CD4-positive, alpha-beta T cell (primary cell): ENCODE measurements at regions of chr10 and their contacts with region 1.

Region 1: DNA sequence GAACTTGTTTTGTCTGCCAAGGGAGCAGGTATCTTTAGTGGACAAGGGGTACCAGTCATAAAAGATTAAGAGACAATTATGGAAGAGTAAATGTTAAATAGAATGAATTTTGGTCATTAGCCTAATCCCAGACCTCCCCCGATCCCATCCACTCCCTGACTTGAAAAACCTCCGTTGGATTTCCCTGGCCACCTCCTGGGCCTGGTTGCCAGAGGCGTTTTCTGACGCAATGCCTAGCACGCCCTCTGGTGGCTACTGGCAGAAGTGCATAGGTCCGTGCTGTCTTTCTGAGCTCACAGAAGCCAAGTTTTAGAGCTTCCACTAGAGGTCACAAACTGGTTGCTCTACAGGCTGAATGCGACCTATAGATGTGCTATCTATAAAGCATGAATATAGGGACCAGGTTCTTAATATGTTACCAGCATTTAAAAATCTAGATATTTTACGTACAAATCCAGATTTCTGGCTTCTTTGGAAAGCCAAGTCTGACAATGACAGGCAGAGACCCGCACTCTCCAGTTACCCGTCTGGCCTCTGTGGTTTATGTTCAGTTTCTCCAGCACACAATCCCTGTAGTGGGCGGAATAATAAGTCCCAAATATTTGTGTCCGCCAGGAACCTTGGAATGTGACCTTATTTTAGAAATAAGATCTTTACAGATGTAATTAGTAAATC is 39.8 kb downstream of the SPOCK2 start:
- DNase-seq: peak; percentile 82 to 94 (median 90)
- ATAC-seq: peak; percentile 99
- H3K4me3 ChIP-seq: no peak overlapping the region
- H3K4me3 Mint-ChIP-seq: no peak overlapping the region
- H3K27ac ChIP-seq: no peak overlapping the region
- H3K27ac Mint-ChIP-seq: no peak overlapping the region
- H3K4me1 ChIP-seq: no peaks in the 10 kb centered on the region
- H3K4me1 Mint-ChIP-seq: peaks cover 9% of the 10 kb centered on the region
- H3K27me3 ChIP-seq: no peaks in the 10 kb centered on the region
- H3K27me3 Mint-ChIP-seq: no peaks in the 10 kb centered on the region
- CTCF ChIP-seq: peak; percentile 100

Region 2: GRCh38 chr10:71319042-71319799 is 729.4 kb before region 1 on chr10 and contains the start of gene SLC29A3:
- CTCF ChIA-PET with region 1: no interaction called
- POLR2A ChIA-PET with region 1: no interaction called
- intact Hi-C with region 1: loop called in 1 of 2 experiments (anchors 10 kb)
- DNase-seq: peak; percentile 69 to 93 (median 79)
- ATAC-seq: peak; percentile 86
- H3K4me3 ChIP-seq: peak within 1 kb of the TSS; percentile 88
- H3K4me3 Mint-ChIP-seq: peak within 1 kb of the TSS; percentile 97
- H3K27ac ChIP-seq: no peak within 1 kb of the TSS
- H3K27ac Mint-ChIP-seq: peak within 1 kb of the TSS; percentile 66
- H3K4me1 ChIP-seq: peaks cover 32% of the 10 kb centered on the region
- H3K4me1 Mint-ChIP-seq: peaks cover 31% of the 10 kb centered on the region
- H3K27me3 ChIP-seq: no peaks in the 10 kb centered on the region
- H3K27me3 Mint-ChIP-seq: no peaks in the 10 kb centered on the region
- CTCF ChIP-seq: peak; percentile 56
- total RNA-seq, gene SLC29A3: 2.3 to 2.5 TPM

Region 3: DNA sequence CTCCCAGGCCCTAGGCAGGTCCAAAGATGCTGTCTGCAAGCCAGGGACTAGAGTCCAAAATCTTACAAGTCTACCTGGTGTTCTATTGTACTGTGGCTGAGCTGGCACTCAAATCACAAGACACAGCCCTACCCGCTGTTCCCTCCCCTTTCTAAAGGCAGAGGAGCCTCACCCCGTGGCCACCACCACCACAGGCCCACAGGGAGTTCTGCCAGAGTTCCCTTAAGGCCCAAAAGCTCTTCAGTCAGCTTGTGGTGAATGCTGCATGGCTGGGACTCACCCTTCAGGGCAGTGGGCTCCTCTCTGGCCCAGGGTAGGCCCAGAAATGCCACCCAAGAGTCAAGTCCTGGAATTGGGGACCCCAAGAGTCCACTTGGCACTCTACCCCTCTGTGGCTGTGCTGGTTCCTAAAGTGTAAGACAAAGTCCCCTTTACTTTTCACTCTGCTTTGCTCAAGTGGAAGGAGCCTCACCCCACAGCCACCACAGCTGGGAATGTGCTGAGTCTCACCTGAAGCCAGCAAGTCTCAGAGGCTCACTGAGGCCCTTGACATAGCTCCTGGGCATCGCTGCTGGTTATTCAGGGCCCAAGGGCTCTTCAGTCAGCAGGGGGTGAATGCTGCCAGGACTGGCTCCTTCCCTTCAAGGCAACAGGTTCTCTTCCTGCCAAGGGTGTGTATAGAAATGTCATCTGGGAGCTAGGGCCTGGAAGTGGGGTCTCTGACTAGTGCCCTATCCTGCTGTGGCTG is 148.7 kb before region 1 on chr10:
- CTCF ChIA-PET with region 1: interaction called, 4 read pairs
- POLR2A ChIA-PET with region 1: interaction called, 6 read pairs
- intact Hi-C with region 1: loop called (anchors 1 to 5 kb)
- DNase-seq: no peak
- ATAC-seq: no peak
- H3K4me3 ChIP-seq: no peak overlapping the region
- H3K4me3 Mint-ChIP-seq: no peak overlapping the region
- H3K27ac ChIP-seq: no peak overlapping the region
- H3K27ac Mint-ChIP-seq: no peak overlapping the region
- H3K4me1 ChIP-seq: peaks cover 6% of the 10 kb centered on the region
- H3K4me1 Mint-ChIP-seq: peaks cover 15% of the 10 kb centered on the region
- H3K27me3 ChIP-seq: no peaks in the 10 kb centered on the region
- H3K27me3 Mint-ChIP-seq: no peaks in the 10 kb centered on the region
- CTCF ChIP-seq: no peak

Region 4: DNA sequence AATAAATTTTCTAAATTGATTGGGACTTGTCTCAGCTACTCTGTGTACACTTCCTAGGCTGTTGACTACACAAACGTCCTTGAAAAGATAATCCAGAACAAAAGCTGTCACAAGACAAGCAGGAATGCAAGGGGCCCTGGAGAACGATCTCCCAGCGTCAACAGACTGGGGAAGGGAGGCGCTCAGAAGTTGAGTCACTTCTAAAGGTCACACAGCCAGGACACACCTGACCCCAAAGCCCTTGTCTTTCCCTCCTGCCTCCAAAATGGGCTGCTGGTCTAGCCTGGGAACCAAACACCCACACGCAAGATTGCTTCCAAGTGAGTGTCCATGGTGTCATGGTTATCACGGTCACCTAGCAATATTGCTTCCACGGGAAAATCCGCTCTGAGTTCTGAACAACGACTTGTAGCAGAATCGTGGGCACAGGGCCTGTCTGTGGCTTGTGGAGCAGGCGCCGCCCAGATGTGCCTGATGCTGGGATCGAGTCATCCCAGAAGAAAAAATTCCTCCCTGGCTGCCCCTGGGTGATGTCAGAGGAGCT is 10.1 kb before region 1 on chr10:
- CTCF ChIA-PET with region 1: interaction called, 10 read pairs
- POLR2A ChIA-PET with region 1: no interaction called
- intact Hi-C with region 1: no loop called
- DNase-seq: no peak
- ATAC-seq: no peak
- H3K4me3 ChIP-seq: no peak overlapping the region
- H3K4me3 Mint-ChIP-seq: no peak overlapping the region
- H3K27ac ChIP-seq: no peak overlapping the region
- H3K27ac Mint-ChIP-seq: no peak overlapping the region
- H3K4me1 ChIP-seq: no peaks in the 10 kb centered on the region
- H3K4me1 Mint-ChIP-seq: no peaks in the 10 kb centered on the region
- H3K27me3 ChIP-seq: no peaks in the 10 kb centered on the region
- H3K27me3 Mint-ChIP-seq: no peaks in the 10 kb centered on the region
- CTCF ChIP-seq: no peak

Region 5: DNA sequence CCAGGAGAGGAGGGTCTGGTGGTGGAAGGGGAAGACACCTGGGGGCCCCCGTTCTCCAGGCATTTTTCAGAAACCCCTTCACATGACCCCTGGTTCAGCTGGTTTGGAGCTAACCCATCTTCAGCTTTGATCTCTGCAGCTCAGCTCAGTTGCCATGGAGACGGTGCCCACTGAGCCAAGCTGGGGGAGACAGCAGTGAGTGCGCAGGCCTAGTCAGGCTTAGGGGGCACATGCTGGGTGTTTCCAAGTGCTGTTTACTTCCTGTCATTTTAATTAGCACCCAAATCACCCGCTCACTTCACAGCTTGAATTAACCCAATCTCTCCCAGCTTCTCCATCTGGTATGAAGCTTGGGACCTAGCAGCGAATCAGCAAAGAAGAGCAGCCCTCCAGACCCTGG is 30.8 kb after region 1 on chr10:
- CTCF ChIA-PET with region 1: interaction called, 12 read pairs
- POLR2A ChIA-PET with region 1: interaction called, 8 read pairs
- intact Hi-C with region 1: no loop called
- DNase-seq: peak in 12 of 14 experiments; percentile 44 to 89 (median 68)
- ATAC-seq: peak; percentile 38
- H3K4me3 ChIP-seq: peak overlapping the region; percentile 28
- H3K4me3 Mint-ChIP-seq: peak overlapping the region; percentile 78
- H3K27ac ChIP-seq: peak overlapping the region; percentile 46 to 96
- H3K27ac Mint-ChIP-seq: peak overlapping the region; percentile 98
- H3K4me1 ChIP-seq: peaks cover 100% of the 10 kb centered on the region
- H3K4me1 Mint-ChIP-seq: peaks cover 93% of the 10 kb centered on the region
- H3K27me3 ChIP-seq: no peaks in the 10 kb centered on the region
- H3K27me3 Mint-ChIP-seq: no peaks in the 10 kb centered on the region
- CTCF ChIP-seq: no peak

Region 6: GRCh38 chr10:72215652-72216549 is 167.3 kb after region 1 on chr10 and contains the starts of genes ANAPC16 and ASCC1:
- CTCF ChIA-PET with region 1: interaction called, 11 read pairs
- POLR2A ChIA-PET with region 1: interaction called, 3 read pairs
- intact Hi-C with region 1: loop called in 1 of 2 experiments (anchors 5 kb)
- DNase-seq: peak; percentile 86 to 97 (median 94)
- ATAC-seq: peak; percentile 79
- H3K4me3 ChIP-seq: peak within 1 kb of the TSS; percentile 83
- H3K4me3 Mint-ChIP-seq: peak within 1 kb of the TSS; percentile 97
- H3K27ac ChIP-seq: peak within 1 kb of the TSS; percentile 89 to 98
- H3K27ac Mint-ChIP-seq: peak within 1 kb of the TSS; percentile 94
- H3K4me1 ChIP-seq: peaks cover 62% of the 10 kb centered on the region
- H3K4me1 Mint-ChIP-seq: peaks cover 50% of the 10 kb centered on the region
- H3K27me3 ChIP-seq: no peaks in the 10 kb centered on the region
- H3K27me3 Mint-ChIP-seq: no peaks in the 10 kb centered on the region
- CTCF ChIP-seq: no peak
- total RNA-seq, gene ANAPC16: 61.9 to 64.3 TPM
- total RNA-seq, gene ASCC1: 16.5 to 19.0 TPM